CD8-positive, alpha-beta T cell (primary cell): ENCODE measurements at regions of chr6 and their contacts with region 1.

Region 1: GRCh38 chr6:44475779-44476434 is 88.4 kb downstream of the CDC5L start:
- DNase-seq: peak; percentile 26 to 80 (median 60)
- ATAC-seq: peak; percentile 74
- H3K4me3 ChIP-seq: no peak overlapping the region
- H3K4me3 Mint-ChIP-seq: no peak overlapping the region
- H3K27ac ChIP-seq: no peak overlapping the region
- H3K27ac Mint-ChIP-seq: no peak overlapping the region
- H3K4me1 ChIP-seq: peaks cover 9% of the 10 kb centered on the region
- H3K4me1 Mint-ChIP-seq: peaks cover 2% of the 10 kb centered on the region
- H3K27me3 ChIP-seq: no peaks in the 10 kb centered on the region
- H3K27me3 Mint-ChIP-seq: no peaks in the 10 kb centered on the region
- CTCF ChIP-seq: peak; percentile 70

Region 2: DNA sequence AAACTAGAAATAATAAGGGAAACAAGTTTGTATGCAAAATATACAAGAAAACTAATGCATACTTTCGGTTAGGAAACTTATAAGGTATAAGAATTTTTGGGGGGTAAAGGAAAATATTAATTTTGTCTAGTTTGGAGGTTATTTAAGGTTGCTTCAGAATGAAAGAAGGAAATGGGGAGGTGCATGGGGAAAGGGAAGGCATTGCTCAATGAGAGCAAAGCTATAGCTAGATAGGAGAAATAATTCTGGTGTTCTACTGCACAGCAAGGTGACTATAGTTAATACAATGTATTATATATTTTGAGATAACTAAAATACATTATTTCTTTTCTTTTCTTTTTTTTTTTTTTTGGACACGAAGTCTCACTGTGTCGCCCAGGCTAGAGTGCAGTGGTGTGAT is 264.6 kb before region 1 on chr6:
- CTCF ChIA-PET with region 1: no interaction called
- POLR2A ChIA-PET with region 1: no interaction called
- intact Hi-C with region 1: no loop called
- DNase-seq: no peak
- ATAC-seq: no peak
- H3K4me3 ChIP-seq: no peak overlapping the region
- H3K4me3 Mint-ChIP-seq: no peak overlapping the region
- H3K27ac ChIP-seq: no peak overlapping the region
- H3K27ac Mint-ChIP-seq: no peak overlapping the region
- H3K4me1 ChIP-seq: no peaks in the 10 kb centered on the region
- H3K4me1 Mint-ChIP-seq: no peaks in the 10 kb centered on the region
- H3K27me3 ChIP-seq: no peaks in the 10 kb centered on the region
- H3K27me3 Mint-ChIP-seq: peaks cover 9% of the 10 kb centered on the region
- CTCF ChIP-seq: no peak

Region 3: GRCh38 chr6:44237813-44238433 is 238.0 kb before region 1 on chr6:
- CTCF ChIA-PET with region 1: no interaction called
- POLR2A ChIA-PET with region 1: no interaction called
- intact Hi-C with region 1: no loop called
- DNase-seq: peak; percentile 62 to 89 (median 77)
- ATAC-seq: peak; percentile 91
- H3K4me3 ChIP-seq: peak overlapping the region; percentile 76 to 98
- H3K4me3 Mint-ChIP-seq: peak overlapping the region; percentile 88
- H3K27ac ChIP-seq: peak overlapping the region; percentile 88 to 95
- H3K27ac Mint-ChIP-seq: peak overlapping the region; percentile 93
- H3K4me1 ChIP-seq: peaks cover 12% of the 10 kb centered on the region
- H3K4me1 Mint-ChIP-seq: peaks cover 11% of the 10 kb centered on the region
- H3K27me3 ChIP-seq: no peaks in the 10 kb centered on the region
- H3K27me3 Mint-ChIP-seq: no peaks in the 10 kb centered on the region
- CTCF ChIP-seq: peak; percentile 93

Region 4: DNA sequence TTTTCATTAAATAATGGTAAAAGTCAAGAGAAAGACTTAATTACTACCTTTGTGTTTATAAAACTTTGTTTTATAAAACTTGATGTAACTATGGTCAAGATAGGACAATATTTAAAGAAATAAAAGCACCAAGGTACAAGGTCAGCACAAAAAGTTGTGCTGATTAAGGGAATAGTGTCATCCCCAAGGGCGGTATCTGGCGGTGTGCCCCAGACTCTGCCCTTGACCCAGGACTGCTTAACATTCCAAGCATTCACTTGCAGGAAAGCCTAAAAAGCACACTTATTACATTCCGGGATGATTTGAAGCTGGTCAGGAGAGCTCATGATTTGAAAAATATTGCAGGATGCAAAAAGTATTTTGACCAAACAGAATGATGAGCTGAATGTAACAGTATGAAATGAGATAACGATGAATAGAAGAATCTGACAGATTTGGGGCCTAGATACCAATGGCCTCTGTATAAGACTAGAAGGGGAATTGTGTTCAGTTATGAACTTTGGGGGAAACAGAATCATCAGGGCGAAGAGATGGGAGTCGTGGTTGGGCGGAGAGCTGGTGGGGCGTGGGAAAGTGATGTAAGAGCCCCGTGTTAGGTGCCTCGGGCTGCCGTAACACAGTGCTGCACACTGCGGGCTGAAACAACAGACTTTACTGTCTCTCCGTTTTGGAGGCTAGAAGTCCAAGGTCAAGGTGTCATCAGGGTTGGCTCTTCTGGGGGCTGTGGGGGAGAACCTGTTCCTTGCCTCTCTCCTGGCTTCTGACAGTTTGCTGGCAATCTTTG is 11.2 kb before region 1 on chr6:
- CTCF ChIA-PET with region 1: interaction called, 19 read pairs
- POLR2A ChIA-PET with region 1: no interaction called
- intact Hi-C with region 1: no loop called
- DNase-seq: no peak
- ATAC-seq: no peak
- H3K4me3 ChIP-seq: no peak overlapping the region
- H3K4me3 Mint-ChIP-seq: no peak overlapping the region
- H3K27ac ChIP-seq: no peak overlapping the region
- H3K27ac Mint-ChIP-seq: no peak overlapping the region
- H3K4me1 ChIP-seq: no peaks in the 10 kb centered on the region
- H3K4me1 Mint-ChIP-seq: no peaks in the 10 kb centered on the region
- H3K27me3 ChIP-seq: peaks cover 0 to 3% of the 10 kb centered on the region in 2 experiments
- H3K27me3 Mint-ChIP-seq: peaks cover 4% of the 10 kb centered on the region
- CTCF ChIP-seq: no peak

Region 5: DNA sequence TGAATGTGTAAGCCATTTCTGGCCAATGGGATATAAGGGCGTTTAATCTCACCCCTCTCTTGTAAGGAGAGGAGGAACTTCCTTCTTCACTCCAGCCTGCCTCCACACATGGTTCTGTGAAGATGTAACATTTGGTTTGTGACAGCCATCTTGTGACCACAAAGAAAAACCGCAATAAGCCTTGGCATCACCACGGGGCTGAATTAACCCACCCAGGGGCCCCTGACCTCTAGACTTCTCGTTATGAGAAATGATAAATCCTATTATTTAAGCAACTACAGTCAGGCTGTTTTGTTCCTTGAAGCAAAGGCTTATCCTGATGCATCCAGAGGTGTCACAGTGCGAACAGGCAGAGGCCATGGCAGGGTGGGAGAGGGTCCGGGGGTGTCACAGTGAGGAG is 51.3 kb after region 1 on chr6:
- CTCF ChIA-PET with region 1: no interaction called
- POLR2A ChIA-PET with region 1: no interaction called
- intact Hi-C with region 1: no loop called
- DNase-seq: peak in 1 of 9 experiments; percentile 5
- ATAC-seq: no peak
- H3K4me3 ChIP-seq: no peak overlapping the region
- H3K4me3 Mint-ChIP-seq: no peak overlapping the region
- H3K27ac ChIP-seq: no peak overlapping the region
- H3K27ac Mint-ChIP-seq: no peak overlapping the region
- H3K4me1 ChIP-seq: no peaks in the 10 kb centered on the region
- H3K4me1 Mint-ChIP-seq: peaks cover 6% of the 10 kb centered on the region
- H3K27me3 ChIP-seq: no peaks in the 10 kb centered on the region
- H3K27me3 Mint-ChIP-seq: peaks cover 25% of the 10 kb centered on the region
- CTCF ChIP-seq: no peak

Region 6: DNA sequence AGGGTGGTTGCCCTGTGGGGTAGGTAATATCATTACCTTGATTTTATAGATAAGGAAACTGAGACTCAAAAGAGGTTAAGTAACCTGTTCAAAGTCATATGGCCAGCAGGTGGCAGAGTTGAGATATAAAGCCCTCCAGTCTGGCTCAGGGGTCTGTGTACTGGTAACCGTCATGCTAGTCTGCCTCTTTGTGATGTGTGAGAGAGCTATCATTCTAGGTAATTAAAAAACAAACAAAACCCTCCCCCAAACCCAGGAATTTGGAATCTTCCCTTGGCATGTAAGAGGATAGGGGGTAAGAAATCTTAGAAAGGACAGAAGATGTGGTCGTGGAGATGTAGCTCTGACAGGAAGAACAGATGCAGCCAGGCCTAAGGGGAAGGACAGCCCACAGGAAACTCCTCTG is 117.6 kb after region 1 on chr6:
- CTCF ChIA-PET with region 1: interaction called, 11 read pairs
- POLR2A ChIA-PET with region 1: no interaction called
- intact Hi-C with region 1: no loop called
- DNase-seq: peak; percentile 25 to 73 (median 65)
- ATAC-seq: peak; percentile 56
- H3K4me3 ChIP-seq: no peak overlapping the region
- H3K4me3 Mint-ChIP-seq: no peak overlapping the region
- H3K27ac ChIP-seq: no peak overlapping the region
- H3K27ac Mint-ChIP-seq: no peak overlapping the region
- H3K4me1 ChIP-seq: no peaks in the 10 kb centered on the region
- H3K4me1 Mint-ChIP-seq: peaks cover 2% of the 10 kb centered on the region
- H3K27me3 ChIP-seq: no peaks in the 10 kb centered on the region
- H3K27me3 Mint-ChIP-seq: peaks cover 7% of the 10 kb centered on the region
- CTCF ChIP-seq: peak; percentile 59

Region 7: DNA sequence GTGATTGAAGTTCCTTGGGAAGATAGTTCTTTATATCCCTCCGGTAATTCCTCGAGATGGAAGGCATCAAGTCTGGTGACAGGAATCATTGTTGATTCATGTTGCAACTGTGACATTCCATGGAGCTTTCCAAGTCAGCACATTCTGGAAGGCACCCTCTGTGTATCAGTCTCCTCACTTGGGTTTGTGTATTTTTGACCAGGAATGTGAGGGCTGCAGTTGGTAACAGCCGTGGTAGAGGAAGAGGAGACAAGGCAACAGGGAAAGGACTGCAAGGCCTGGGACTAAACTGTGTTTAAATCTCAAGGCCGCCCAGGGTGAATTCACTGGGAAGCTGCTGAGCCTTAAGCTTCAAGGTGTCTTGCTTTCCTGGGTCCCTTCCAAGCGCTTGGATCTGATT is 1440.8 kb after region 1 on chr6:
- CTCF ChIA-PET with region 1: interaction called, 32 read pairs
- POLR2A ChIA-PET with region 1: no interaction called
- intact Hi-C with region 1: no loop called
- DNase-seq: no peak
- ATAC-seq: no peak
- H3K4me3 ChIP-seq: no peak overlapping the region
- H3K4me3 Mint-ChIP-seq: no peak overlapping the region
- H3K27ac ChIP-seq: no peak overlapping the region
- H3K27ac Mint-ChIP-seq: no peak overlapping the region
- H3K4me1 ChIP-seq: no peaks in the 10 kb centered on the region
- H3K4me1 Mint-ChIP-seq: no peaks in the 10 kb centered on the region
- H3K27me3 ChIP-seq: no peaks in the 10 kb centered on the region
- H3K27me3 Mint-ChIP-seq: no peaks in the 10 kb centered on the region
- CTCF ChIP-seq: no peak

Region 8: DNA sequence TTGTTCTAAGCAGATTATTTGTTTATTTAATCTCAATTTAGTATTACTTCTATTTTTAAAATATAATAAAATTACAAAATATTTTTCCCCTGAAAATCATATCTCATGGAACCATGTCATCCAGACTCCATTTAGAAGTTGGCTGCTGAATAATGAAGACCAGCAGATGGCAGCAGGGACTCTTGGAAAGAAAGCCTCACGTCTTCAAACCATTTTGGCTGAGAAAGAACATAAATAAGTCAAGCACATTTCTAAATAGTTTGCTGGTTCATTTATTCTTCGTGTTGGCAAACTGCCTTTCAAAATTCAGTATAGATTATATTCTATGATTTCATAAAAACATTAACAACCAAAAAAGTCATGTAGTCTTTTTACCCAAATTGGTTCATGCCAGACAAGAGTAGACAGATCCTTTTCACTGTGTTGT is 1943.7 kb after region 1 on chr6:
- CTCF ChIA-PET with region 1: no interaction called
- POLR2A ChIA-PET with region 1: no interaction called
- intact Hi-C with region 1: loop called in 1 of 2 experiments (anchors 10 kb)
- DNase-seq: peak in 2 of 9 experiments; percentile 30 to 46
- ATAC-seq: no peak
- H3K4me3 ChIP-seq: no peak overlapping the region
- H3K4me3 Mint-ChIP-seq: no peak overlapping the region
- H3K27ac ChIP-seq: no peak overlapping the region
- H3K27ac Mint-ChIP-seq: no peak overlapping the region
- H3K4me1 ChIP-seq: no peaks in the 10 kb centered on the region
- H3K4me1 Mint-ChIP-seq: no peaks in the 10 kb centered on the region
- H3K27me3 ChIP-seq: no peaks in the 10 kb centered on the region
- H3K27me3 Mint-ChIP-seq: peaks cover 19% of the 10 kb centered on the region
- CTCF ChIP-seq: peak; percentile 31